ENCODE measurements at regions of chr3 and their contacts with region 1.

Region 1: DNA sequence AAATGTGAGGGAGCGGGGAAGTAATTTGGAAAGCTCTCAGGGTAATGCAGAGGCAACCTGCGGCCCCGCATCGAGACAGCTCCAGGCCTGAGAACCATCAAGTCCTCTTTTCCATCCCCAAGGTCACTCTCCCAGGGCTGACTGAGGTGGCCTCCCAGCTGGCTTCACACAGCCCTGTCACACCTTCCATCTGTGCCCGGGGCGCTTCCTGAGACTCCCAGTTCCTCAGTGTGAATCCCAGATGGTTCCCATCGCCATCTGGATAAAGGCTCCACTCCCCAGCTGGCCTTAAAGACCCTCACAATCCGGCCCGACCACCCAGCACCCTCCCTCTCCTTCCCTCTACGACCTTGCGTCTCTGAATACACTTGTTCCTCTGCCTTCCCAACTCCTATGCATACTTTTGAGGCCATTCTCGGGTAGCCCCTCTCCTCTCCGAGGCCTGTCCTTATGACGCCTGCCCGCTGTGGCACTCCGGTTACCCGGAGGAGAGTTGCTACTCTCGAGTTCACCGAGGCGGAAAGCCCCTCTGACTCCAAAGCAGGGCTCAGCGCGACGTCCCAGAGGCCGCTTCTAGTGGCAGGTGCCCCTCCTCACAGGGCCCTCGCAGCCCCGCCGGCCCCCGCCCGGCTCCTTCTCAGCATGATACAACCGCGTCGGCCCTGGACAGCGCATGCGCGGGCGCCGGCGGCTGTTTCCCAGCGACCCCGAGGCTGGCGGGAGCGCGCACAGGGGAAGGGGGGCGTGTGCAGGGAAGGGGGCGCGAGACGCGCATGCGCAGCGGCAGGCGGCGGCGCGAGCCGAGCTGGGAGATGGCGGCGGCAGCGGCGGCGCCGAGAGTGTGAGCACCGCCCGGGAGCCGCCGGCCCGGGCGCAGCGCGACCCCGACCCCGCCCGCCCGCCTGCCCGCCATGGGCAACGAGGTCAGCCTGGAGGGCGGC is at the start of gene BSN:
- DNase-seq: peak; percentile 86
- total RNA-seq, gene BSN: 0.24 and 0.31 TPM in 2 replicates

Region 2: GRCh38 chr3:49378249-49378892 is 175.6 kb before region 1 on chr3:
- in situ Hi-C with region 1: no loop called
- DNase-seq: peak; percentile 29

Region 3: GRCh38 chr3:49668414-49668797 is 114.4 kb after region 1 on chr3:
- in situ Hi-C with region 1: loop called (anchors 10 kb)
- DNase-seq: no peak